ENCODE measurements at regions of chr19 and their contacts with region 1.

Region 1: DNA sequence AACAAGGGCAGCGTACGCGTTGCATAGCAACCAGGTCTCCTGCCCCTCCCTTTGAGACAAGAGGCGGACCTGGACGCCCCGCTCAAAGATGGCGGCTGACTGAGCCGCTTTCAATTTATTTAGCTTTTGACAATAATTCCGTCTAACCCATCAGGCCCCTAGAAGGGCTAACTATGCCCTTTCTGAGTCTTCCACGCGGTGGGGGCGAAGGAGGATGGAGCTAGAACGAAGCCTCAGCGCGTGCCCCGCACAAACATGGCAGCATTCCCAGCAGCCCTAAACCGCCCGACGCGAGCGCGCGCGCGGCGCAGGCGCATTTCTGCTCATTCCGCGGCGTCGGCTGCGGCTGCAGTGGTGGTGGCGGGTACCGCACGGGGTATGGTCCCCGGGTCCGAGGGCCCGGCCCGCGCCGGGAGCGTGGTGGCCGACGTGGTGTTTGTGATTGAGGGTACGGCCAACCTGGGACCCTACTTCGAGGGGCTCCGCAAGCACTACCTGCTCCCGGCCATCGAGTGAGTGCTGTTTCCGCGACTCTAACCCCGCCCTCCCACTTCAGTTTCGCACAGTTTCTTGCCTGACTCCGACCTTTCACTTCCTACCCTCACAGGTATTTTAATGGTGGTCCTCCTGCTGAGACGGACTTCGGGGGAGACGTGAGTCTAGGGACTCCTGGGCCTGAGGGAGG is at the start of gene MED25:
- DNase-seq: peak; percentile 85 to 87
- ATAC-seq: peak; percentile 75 to 83 (median 78)
- H3K4me3 ChIP-seq: peak within 1 kb of the TSS; percentile 49 to 93 (median 86)
- H3K27ac ChIP-seq: peak within 1 kb of the TSS; percentile 83 to 98 (median 96)
- H3K4me1 ChIP-seq: peaks cover 5 to 44% (median 38%) of the 10 kb centered on the region in 9 donors
- H3K27me3 ChIP-seq: no peaks in the 10 kb centered on the region
- CTCF ChIP-seq: peak in 6 of 9 donors; percentile 27 to 59 (median 36)
- total RNA-seq, gene MED25: 39.7 to 110 (median 54.9) TPM

Region 2: GRCh38 chr19:49766007-49766937 is 51.8 kb before region 1 on chr19:
- intact Hi-C with region 1: loop called in 2 of 10 experiments (anchors 1 to 5 kb)
- DNase-seq: peak; percentile 98 to 100
- ATAC-seq: peak; percentile 90 to 96 (median 94)
- H3K4me3 ChIP-seq: peak overlapping the region; percentile 4 to 96 (median 82)
- H3K27ac ChIP-seq: peak overlapping the region; percentile 81 to 97 (median 92)
- H3K4me1 ChIP-seq: peaks cover 4 to 49% (median 33%) of the 10 kb centered on the region in 9 donors
- H3K27me3 ChIP-seq: no peaks in the 10 kb centered on the region
- CTCF ChIP-seq: no peak

Region 3: GRCh38 chr19:49850473-49851342 is 32.6 kb after region 1 on chr19 and contains the start of gene PTOV1:
- intact Hi-C with region 1: loop called in 6 of 10 experiments (anchors 2 to 5 kb)
- DNase-seq: peak; percentile 92 to 93
- ATAC-seq: peak; percentile 94 to 98 (median 96)
- H3K4me3 ChIP-seq: peak within 1 kb of the TSS; percentile 71 to 100 (median 86)
- H3K27ac ChIP-seq: peak within 1 kb of the TSS; percentile 96 to 100 (median 99)
- H3K4me1 ChIP-seq: peaks cover 9 to 49% (median 29%) of the 10 kb centered on the region in 9 donors
- H3K27me3 ChIP-seq: no peaks in the 10 kb centered on the region
- CTCF ChIP-seq: no peak
- total RNA-seq, gene PTOV1: 67.8 to 137 (median 90.0) TPM

Region 4: DNA sequence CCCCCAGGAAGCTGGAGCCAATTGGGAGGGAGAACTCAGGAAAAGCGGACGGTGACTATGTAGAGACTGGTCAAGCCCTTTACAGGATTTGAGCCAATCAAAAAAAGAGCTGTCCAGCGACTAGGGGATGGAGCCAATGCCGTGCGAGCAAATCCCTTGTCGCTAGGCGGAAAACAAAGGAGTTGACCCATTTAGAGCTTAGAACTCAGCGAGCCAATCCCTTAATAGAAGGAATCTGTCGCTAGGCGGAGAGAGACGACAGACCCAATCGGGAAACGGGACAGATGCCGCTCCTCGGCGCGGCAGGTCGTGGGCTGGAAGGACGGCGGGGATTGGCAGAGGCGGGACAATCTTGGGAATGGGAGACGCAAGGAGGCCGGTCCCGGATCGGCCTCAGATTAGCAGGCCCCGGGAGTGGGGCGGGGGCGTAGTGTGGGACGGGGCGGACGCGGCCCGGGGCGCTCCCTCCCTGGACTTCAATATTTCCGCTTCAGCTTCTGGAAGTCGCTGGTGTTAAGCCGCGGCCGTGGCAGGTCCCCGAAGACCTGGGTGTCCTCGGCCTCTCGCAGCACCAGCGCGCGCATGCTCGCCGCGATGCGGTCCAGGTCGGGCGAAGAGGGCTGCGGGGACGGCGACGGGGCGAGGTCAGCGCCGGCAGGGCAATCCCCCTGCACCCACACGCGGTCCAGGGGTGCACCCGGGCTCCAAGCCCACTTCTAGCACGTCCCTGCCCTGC is 51.5 kb after region 1 on chr19:
- intact Hi-C with region 1: loop called in 5 of 10 experiments (anchors 2 to 5 kb)
- DNase-seq: peak; percentile 96 to 98
- ATAC-seq: peak; percentile 77 to 91 (median 84)
- H3K4me3 ChIP-seq: peak overlapping the region; percentile 41 to 73 (median 60)
- H3K27ac ChIP-seq: peak overlapping the region; percentile 88 to 98 (median 94)
- H3K4me1 ChIP-seq: peaks cover 20 to 60% (median 49%) of the 10 kb centered on the region in 9 donors
- H3K27me3 ChIP-seq: no peaks in the 10 kb centered on the region
- CTCF ChIP-seq: peak in 3 of 9 donors; percentile 14 to 24 (median 16)